Endothelial cell of umbilical vein (primary cell): ENCODE measurements at regions of chr2 and their contacts with region 1.

Region 1: DNA sequence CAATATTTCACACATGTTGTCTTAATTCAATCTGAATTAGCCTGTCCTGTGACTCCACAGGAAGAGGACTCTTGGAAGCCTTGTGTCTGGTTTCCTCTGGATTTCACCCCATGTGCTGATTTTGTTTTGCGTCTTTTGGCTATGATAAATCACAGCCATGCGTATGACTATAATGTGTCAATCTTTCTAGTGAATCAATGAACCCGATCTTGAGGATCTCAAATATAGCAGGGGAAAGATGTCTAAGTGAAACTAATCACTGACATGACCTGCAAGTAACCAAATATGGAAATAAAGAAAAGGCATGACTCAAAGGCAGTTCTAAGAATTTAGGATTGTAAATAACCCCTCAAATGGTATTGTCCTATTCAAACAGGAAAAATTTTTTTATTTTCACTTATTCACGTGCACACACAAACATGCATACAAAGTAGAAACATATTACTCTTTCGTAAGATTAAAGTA is 8.2 kb downstream of the WDFY1 start:
- DNase-seq: peak; percentile 77
- H3K4me3 ChIP-seq: peak overlapping the region in 1 of 3 experiments; percentile 30
- H3K27ac ChIP-seq: peak overlapping the region; percentile 46
- H3K4me1 ChIP-seq: peaks cover 39% of the 10 kb centered on the region
- H3K27me3 ChIP-seq: no peaks in the 10 kb centered on the region
- CTCF ChIP-seq: no peak
- POLR2A ChIP-seq: no peak

Region 2: GRCh38 chr2:223925106-223925505 is 11.8 kb before region 1 on chr2:
- CTCF ChIA-PET with region 1: interaction called, 13 read pairs
- POLR2A ChIA-PET with region 1: interaction called, 4 read pairs
- dilution Hi-C with region 1: no loop called
- intact Hi-C with region 1: loop called (anchors 1 kb)
- DNase-seq: no peak
- H3K4me3 ChIP-seq: no peak overlapping the region
- H3K27ac ChIP-seq: no peak overlapping the region
- H3K4me1 ChIP-seq: peaks cover 51% of the 10 kb centered on the region
- H3K27me3 ChIP-seq: no peaks in the 10 kb centered on the region
- CTCF ChIP-seq: no peak
- POLR2A ChIP-seq: no peak

Region 3: GRCh38 chr2:224723586-224724217 is 786.8 kb after region 1 on chr2:
- CTCF ChIA-PET with region 1: no interaction called
- POLR2A ChIA-PET with region 1: no interaction called
- dilution Hi-C with region 1: no loop called
- intact Hi-C with region 1: no loop called
- DNase-seq: no peak
- H3K4me3 ChIP-seq: no peak overlapping the region
- H3K27ac ChIP-seq: no peak overlapping the region
- H3K4me1 ChIP-seq: no peaks in the 10 kb centered on the region
- H3K27me3 ChIP-seq: no peaks in the 10 kb centered on the region
- CTCF ChIP-seq: no peak
- POLR2A ChIP-seq: no peak